ENCODE measurements at regions of chr10 and their contacts with region 1.

Region 1: GRCh38 chr10:71209352-71209715 is 3.0 kb upstream of the UNC5B start:
- H3K4me3 ChIP-seq: no peak overlapping the region
- H3K27ac ChIP-seq: no peak overlapping the region
- H3K4me1 ChIP-seq: peaks cover 13% of the 10 kb centered on the region
- CTCF ChIP-seq: no peak

Region 2: GRCh38 chr10:71285180-71285545 is 75.8 kb after region 1 on chr10:
- CTCF ChIA-PET with region 1: interaction called, 18 read pairs
- POLR2A ChIA-PET with region 1: interaction called, 3 read pairs
- H3K4me3 ChIP-seq: no peak overlapping the region
- H3K27ac ChIP-seq: no peak overlapping the region
- H3K4me1 ChIP-seq: no peaks in the 10 kb centered on the region
- CTCF ChIP-seq: peak; percentile 68; the same call in 1 of the 2 replicates

Region 3: GRCh38 chr10:71462062-71462935 is 253.0 kb after region 1 on chr10:
- CTCF ChIA-PET with region 1: no interaction called
- POLR2A ChIA-PET with region 1: no interaction called
- H3K4me3 ChIP-seq: no peak overlapping the region
- H3K27ac ChIP-seq: no peak overlapping the region
- H3K4me1 ChIP-seq: no peaks in the 10 kb centered on the region
- CTCF ChIP-seq: no peak

Measured in HEK293 (cell line).